ENCODE measurements at regions of chr17 and their contacts with region 1.

Region 1: GRCh38 chr17:58402047-58402446 is 15.3 kb downstream of the RNF43 start:
- DNase-seq: no peak
- H3K4me3 Mint-ChIP-seq: no peak overlapping the region
- H3K27ac Mint-ChIP-seq: no peak overlapping the region
- H3K4me1 Mint-ChIP-seq: peaks cover 14% of the 10 kb centered on the region
- H3K27me3 Mint-ChIP-seq: peaks cover 4% of the 10 kb centered on the region

Region 2: GRCh38 chr17:58284320-58285067 is 117.6 kb before region 1 on chr17:
- intact Hi-C with region 1: no loop called
- DNase-seq: no peak
- H3K4me3 Mint-ChIP-seq: no peak overlapping the region
- H3K27ac Mint-ChIP-seq: no peak overlapping the region
- H3K4me1 Mint-ChIP-seq: peaks cover 4% of the 10 kb centered on the region
- H3K27me3 Mint-ChIP-seq: peaks cover 32% of the 10 kb centered on the region

Region 3: GRCh38 chr17:58369214-58370031 is 32.6 kb before region 1 on chr17:
- intact Hi-C with region 1: loop called (anchors 5 kb)
- DNase-seq: no peak
- H3K4me3 Mint-ChIP-seq: no peak overlapping the region
- H3K27ac Mint-ChIP-seq: no peak overlapping the region
- H3K4me1 Mint-ChIP-seq: peaks cover 9% of the 10 kb centered on the region
- H3K27me3 Mint-ChIP-seq: no peaks in the 10 kb centered on the region

Region 4: DNA sequence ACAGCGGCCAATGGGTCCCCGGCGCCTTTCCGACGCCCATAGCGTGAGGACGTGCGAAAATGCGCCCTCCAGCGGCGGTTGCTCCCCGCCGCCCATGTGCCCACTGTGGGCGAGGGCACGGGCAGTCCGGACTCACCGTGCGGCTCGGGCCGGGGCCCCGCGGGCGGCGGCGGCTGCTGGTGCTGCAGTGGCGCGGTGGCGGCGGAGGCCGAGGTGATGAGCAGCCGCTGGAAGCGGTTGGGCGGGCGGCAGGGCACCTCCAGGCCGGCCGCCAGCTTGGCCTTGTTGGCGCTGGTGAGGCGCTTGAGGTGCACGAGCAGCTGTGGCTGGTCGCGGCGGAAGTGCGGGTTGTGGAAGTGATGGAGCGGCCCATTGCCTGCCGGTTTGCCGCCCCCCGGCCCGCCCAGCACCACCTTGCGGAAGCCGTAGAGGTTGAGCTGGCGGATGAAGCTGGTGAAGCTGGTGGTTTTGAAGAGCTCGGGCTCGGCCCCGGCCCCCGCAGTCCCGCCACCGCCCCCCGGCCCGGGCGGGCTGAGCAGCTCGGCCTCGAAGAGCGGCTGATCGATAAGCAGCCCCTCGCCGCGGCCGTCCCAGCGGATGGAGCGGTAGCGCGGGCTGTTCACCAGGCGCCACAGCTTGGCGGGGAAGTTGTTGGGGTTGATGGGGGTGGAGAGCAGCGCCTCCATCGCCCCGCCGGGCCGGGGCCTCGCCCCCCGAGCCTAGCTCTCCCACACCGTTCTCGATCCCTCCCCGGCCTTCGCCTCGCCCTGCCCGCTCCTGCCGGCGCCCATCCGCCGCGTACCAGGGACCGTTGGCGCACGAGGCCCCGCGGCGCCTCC is 85.8 kb after region 1 on chr17 and contains the start of gene HSF5:
- intact Hi-C with region 1: no loop called
- DNase-seq: peak; percentile 53
- H3K4me3 Mint-ChIP-seq: peak within 1 kb of the TSS; percentile 39
- H3K27ac Mint-ChIP-seq: no peak within 1 kb of the TSS
- H3K4me1 Mint-ChIP-seq: peaks cover 14% of the 10 kb centered on the region
- H3K27me3 Mint-ChIP-seq: peaks cover 4% of the 10 kb centered on the region
- total RNA-seq, gene HSF5: 1.1 and 1.2 TPM in 2 replicates

Measured in activated T-helper 1 cell treated with anti-CD3 and anti-CD28 coated beads, Interleukin-12 subunit alpha, Interleukin-12 subunit beta, Interleukin-2, Interleukin-4 antibody, amounts not matched to agents 30 ng/mL and 10 ng/mL and 1 ng/mL, durations not matched to agents 14 hours and 24 hours and 36 hours (primary cell).